A549 (cell line): ENCODE measurements at regions of chr15 and their contacts with region 1.

Region 1: GRCh38 chr15:60326824-60327654 is 70.7 kb downstream of the ANXA2 start:
- DNase-seq: peak in 1 of 2 experiments; percentile 67
- ATAC-seq: peak; percentile 56 to 72; a peak in 5 of 6 replicates
- H3K4me3 ChIP-seq: no peak overlapping the region
- H3K27ac ChIP-seq: no peak overlapping the region
- H3K4me1 ChIP-seq: peaks cover 7% of the 10 kb centered on the region
- CTCF ChIP-seq: peak; percentile 99
- EP300 ChIP-seq: no peak
- POLR2A ChIP-seq: no peak
- RAD21 ChIP-seq: peak; percentile 96 to 98

Region 2: GRCh38 chr15:59711451-59712243 is 615.4 kb before region 1 on chr15:
- CTCF ChIA-PET with region 1: interaction called, 12 read pairs
- POLR2A ChIA-PET with region 1: no interaction called
- DNase-seq: no peak
- ATAC-seq: peak; percentile 34 to 55; a peak in 1 of 6 replicates
- H3K4me3 ChIP-seq: no peak overlapping the region
- H3K27ac ChIP-seq: no peak overlapping the region
- H3K4me1 ChIP-seq: no peaks in the 10 kb centered on the region
- CTCF ChIP-seq: no peak
- EP300 ChIP-seq: no peak
- POLR2A ChIP-seq: no peak
- RAD21 ChIP-seq: no peak

Region 3: GRCh38 chr15:59751552-59752413 is 575.3 kb before region 1 on chr15:
- CTCF ChIA-PET with region 1: interaction called, 22 read pairs
- POLR2A ChIA-PET with region 1: no interaction called
- DNase-seq: peak; percentile 33 to 52
- ATAC-seq: peak; percentile 84 to 88; a peak in 5 of 6 replicates
- H3K4me3 ChIP-seq: no peak overlapping the region
- H3K27ac ChIP-seq: no peak overlapping the region
- H3K4me1 ChIP-seq: no peaks in the 10 kb centered on the region
- CTCF ChIP-seq: peak; percentile 34; the same call in 2 of the 3 replicates
- EP300 ChIP-seq: no peak
- POLR2A ChIP-seq: no peak
- RAD21 ChIP-seq: peak; percentile 40 to 58; a peak in 4 of 5 replicates

Region 4: DNA sequence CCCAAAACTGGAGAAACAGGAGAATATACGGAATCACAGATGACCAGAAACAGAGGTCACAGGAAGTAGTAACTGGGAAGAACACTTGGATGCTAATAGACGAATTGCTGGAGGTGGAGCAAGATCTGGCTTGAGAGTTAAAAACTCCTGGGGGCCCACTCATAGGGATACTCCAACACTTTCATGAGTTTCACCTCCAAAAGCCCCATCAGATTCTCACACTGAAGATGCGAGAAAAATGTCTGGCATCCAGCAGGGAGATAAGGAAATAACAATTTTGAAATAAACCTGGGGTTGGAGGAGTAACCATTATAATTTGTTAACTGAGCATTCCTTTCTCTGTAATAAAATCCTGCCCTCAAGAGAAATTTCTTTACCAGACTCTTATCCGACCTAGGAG is 83.3 kb before region 1 on chr15:
- CTCF ChIA-PET with region 1: no interaction called
- POLR2A ChIA-PET with region 1: no interaction called
- DNase-seq: no peak
- ATAC-seq: no peak
- H3K4me3 ChIP-seq: no peak overlapping the region
- H3K27ac ChIP-seq: no peak overlapping the region
- H3K4me1 ChIP-seq: no peaks in the 10 kb centered on the region
- CTCF ChIP-seq: no peak
- EP300 ChIP-seq: no peak
- POLR2A ChIP-seq: no peak
- RAD21 ChIP-seq: no peak

Region 5: GRCh38 chr15:60315878-60316277 is 11.2 kb before region 1 on chr15:
- CTCF ChIA-PET with region 1: interaction called, 41 read pairs
- POLR2A ChIA-PET with region 1: no interaction called
- DNase-seq: no peak
- ATAC-seq: no peak
- H3K4me3 ChIP-seq: no peak overlapping the region
- H3K27ac ChIP-seq: no peak overlapping the region
- H3K4me1 ChIP-seq: no peaks in the 10 kb centered on the region
- CTCF ChIP-seq: no peak
- EP300 ChIP-seq: no peak
- POLR2A ChIP-seq: no peak
- RAD21 ChIP-seq: no peak

Region 6: DNA sequence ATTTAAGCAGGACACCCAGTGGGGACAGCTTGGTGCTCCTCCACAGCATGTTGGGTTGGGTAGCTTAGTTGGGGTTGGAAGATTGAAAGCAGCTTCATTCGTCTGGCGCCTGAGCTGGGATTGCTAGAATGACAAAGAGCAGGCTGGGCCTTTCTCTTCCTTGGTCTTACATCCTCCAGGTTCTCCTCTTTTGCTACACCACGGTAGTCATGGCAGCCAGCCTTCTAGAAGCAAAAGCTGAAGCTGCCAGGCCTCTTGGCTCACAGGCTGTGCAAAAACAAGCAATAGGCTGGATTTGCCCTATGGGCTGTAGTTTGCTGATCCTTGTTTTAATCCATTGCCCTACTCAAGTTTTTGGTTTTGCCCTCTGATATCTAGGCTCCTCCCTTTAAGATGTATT is 73.9 kb after region 1 on chr15:
- CTCF ChIA-PET with region 1: no interaction called
- POLR2A ChIA-PET with region 1: no interaction called
- DNase-seq: no peak
- ATAC-seq: no peak
- H3K4me3 ChIP-seq: no peak overlapping the region
- H3K27ac ChIP-seq: peak overlapping the region; percentile 97 to 99
- H3K4me1 ChIP-seq: peaks cover 57% of the 10 kb centered on the region
- CTCF ChIP-seq: no peak
- EP300 ChIP-seq: no peak
- POLR2A ChIP-seq: no peak
- RAD21 ChIP-seq: no peak

Region 7: GRCh38 chr15:60520825-60521368 is 193.9 kb after region 1 on chr15:
- CTCF ChIA-PET with region 1: interaction called, 123 read pairs
- POLR2A ChIA-PET with region 1: interaction called, 3 read pairs
- DNase-seq: peak; percentile 68 to 84
- ATAC-seq: peak; percentile 91 to 93
- H3K4me3 ChIP-seq: no peak overlapping the region
- H3K27ac ChIP-seq: no peak overlapping the region
- H3K4me1 ChIP-seq: peaks cover 13% of the 10 kb centered on the region
- CTCF ChIP-seq: peak; percentile 98
- EP300 ChIP-seq: no peak
- POLR2A ChIP-seq: no peak
- RAD21 ChIP-seq: peak; percentile 94 to 98

Region 8: GRCh38 chr15:60673918-60674558 is 347.0 kb after region 1 on chr15:
- CTCF ChIA-PET with region 1: no interaction called
- POLR2A ChIA-PET with region 1: no interaction called
- DNase-seq: peak; percentile 42 to 58
- ATAC-seq: peak; percentile 60 to 73; a peak in 5 of 6 replicates
- H3K4me3 ChIP-seq: no peak overlapping the region
- H3K27ac ChIP-seq: no peak overlapping the region
- H3K4me1 ChIP-seq: peaks cover 5% of the 10 kb centered on the region; the same call in 1 of the 3 replicates
- CTCF ChIP-seq: no peak
- EP300 ChIP-seq: no peak
- POLR2A ChIP-seq: no peak
- RAD21 ChIP-seq: no peak